ENCODE measurements at regions of chr9 and their contacts with region 1.

Region 1: DNA sequence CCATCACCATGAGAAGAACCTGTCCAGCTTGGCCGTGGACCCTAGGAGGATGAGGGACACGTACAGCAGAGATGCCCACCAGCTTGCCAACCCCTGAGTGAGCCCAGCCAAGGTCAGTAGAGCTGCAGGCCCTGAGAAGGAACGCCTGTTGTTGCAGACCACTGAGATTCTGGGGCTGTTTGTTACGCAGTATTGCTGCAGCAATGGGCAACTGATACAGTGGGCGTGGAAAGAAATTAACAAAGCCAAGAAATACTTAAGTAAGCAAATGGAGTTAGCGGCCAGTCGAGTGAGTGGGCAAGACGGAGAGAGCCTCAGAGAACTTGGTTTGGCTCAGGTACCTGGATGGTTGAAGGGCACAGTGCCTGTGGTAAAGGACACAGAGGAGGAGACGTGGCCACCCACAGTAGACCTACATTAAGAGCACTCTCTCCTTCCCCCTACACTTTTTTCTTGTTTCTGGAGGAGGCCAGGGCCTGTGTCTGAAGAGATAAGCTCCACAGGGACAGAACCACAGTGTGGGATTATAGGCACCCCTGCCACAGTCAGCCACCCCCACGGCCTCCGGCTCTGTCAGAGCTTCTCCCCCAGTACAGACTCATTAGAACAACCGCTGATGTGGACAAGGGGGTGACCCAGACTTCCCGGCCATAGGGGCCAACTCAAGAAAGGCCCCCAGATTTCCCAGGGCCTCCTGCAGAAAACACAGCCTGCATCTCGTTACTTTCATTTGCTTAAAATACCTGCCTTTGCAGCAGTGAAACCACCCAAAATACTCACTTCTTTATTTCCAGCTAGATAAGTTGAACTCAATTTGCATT is 40.1 kb upstream of the GRHPR start:
- DNase-seq: no peak
- H3K4me3 ChIP-seq: no peak overlapping the region
- H3K27ac ChIP-seq: peak overlapping the region; percentile 84
- H3K4me1 ChIP-seq: peaks cover 33% of the 10 kb centered on the region
- H3K27me3 ChIP-seq: no peaks in the 10 kb centered on the region
- CTCF ChIP-seq: no peak

Region 2: DNA sequence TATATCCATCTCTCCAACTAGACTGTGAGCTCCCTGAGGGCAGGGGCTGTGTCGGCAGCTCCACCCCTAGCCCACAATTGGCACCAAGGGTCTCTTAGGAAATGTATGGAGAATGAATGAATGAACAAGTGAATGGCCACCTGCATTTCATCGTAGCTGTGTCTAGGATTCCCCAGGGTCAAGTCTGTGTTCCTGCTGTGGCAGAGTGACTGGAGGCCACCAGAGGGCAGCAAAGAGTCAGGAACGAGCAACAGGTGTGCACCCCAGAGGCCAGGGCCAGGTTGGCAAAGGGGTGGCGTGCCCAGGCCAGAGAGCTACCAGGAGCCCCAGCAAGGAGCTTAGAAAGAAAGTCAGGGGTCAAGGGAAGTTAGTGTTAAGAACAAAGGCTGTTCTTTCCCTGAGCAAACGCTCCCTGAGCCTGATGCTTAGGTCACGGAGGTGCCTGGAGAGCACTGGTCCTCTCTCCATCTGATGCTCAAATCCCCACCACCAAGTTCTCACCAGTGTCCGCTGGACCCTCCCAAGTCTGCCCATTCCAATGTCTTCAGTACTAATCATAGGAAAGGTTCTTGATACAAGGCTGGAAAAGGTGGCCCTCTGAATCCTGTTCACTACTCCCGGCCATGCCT is 509.0 kb before region 1 on chr9:
- CTCF ChIA-PET with region 1: no interaction called
- POLR2A ChIA-PET with region 1: no interaction called
- intact Hi-C with region 1: loop called (anchors 10 kb)
- DNase-seq: peak; percentile 72
- H3K4me3 ChIP-seq: no peak overlapping the region
- H3K27ac ChIP-seq: no peak overlapping the region
- H3K4me1 ChIP-seq: no peaks in the 10 kb centered on the region
- H3K27me3 ChIP-seq: no peaks in the 10 kb centered on the region
- CTCF ChIP-seq: peak; percentile 95

Region 3: DNA sequence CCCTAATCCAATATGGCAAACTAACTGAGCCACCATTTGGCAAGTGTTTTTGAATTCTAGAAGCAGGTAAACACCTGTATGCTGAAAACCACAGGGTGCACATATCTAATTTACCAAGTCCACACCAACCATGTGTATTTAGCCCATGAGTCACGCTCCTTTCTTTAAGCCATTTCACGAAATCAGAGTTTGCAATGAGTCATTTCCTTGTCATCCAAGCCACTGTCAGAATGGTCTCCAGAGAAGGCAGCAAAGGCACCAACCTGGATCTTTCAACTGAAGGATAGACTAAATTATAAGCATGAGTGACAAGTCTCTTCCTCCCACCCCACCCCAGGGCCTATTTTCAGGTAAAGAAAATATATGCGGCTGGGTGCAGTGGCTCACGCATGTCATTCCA is 458.3 kb before region 1 on chr9:
- CTCF ChIA-PET with region 1: no interaction called
- POLR2A ChIA-PET with region 1: no interaction called
- intact Hi-C with region 1: loop called (anchors 1 kb)
- DNase-seq: peak; percentile 89
- H3K4me3 ChIP-seq: no peak overlapping the region
- H3K27ac ChIP-seq: no peak overlapping the region
- H3K4me1 ChIP-seq: peaks cover 36% of the 10 kb centered on the region
- H3K27me3 ChIP-seq: no peaks in the 10 kb centered on the region
- CTCF ChIP-seq: no peak

Region 4: DNA sequence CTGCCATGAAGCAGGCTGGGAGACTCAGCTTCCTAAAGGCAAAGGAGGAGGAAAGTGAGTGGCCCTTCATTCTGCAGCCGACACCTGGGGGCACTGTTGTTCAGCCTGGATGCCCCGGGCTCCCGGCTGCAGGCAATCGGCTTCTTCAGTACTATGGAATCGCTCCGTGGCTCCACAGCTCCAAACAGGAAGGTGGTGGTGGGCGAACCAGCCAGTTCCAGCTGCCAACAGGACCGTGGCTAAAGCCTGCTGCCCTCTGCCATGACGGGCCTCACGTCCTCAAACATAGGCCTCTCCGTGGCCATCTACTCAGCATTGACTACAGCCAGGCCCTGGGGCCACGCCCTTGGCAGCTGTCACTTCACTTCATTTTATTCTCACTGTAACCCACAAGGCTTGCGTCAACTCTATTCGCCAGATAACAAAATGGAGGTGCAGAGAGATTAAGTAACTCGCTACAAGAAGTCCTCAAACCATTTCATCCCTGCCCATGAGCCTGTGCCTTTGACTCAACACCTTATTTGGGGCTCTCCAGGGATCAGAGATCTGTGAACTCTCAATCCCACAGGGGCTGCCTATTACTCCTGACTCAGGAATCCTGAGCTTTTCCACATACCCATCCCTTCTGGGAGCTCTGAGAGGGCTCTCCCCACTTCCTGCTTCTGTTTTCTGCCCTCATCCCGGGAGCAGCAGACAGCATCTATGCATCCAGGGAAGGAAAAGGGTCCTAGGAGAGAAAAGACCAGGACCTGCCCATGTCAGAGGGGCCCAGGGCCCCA is 386.3 kb before region 1 on chr9:
- CTCF ChIA-PET with region 1: no interaction called
- POLR2A ChIA-PET with region 1: no interaction called
- intact Hi-C with region 1: loop called (anchors 10 kb)
- DNase-seq: peak; percentile 89
- H3K4me3 ChIP-seq: no peak overlapping the region
- H3K27ac ChIP-seq: no peak overlapping the region
- H3K4me1 ChIP-seq: peaks cover 19% of the 10 kb centered on the region
- H3K27me3 ChIP-seq: no peaks in the 10 kb centered on the region
- CTCF ChIP-seq: peak; percentile 89

Region 5: GRCh38 chr9:37144762-37145161 is 237.6 kb before region 1 on chr9:
- CTCF ChIA-PET with region 1: no interaction called
- POLR2A ChIA-PET with region 1: no interaction called
- intact Hi-C with region 1: loop called (anchors 5 kb)
- DNase-seq: peak; percentile 42
- H3K4me3 ChIP-seq: no peak overlapping the region
- H3K27ac ChIP-seq: peak overlapping the region; percentile 44
- H3K4me1 ChIP-seq: peaks cover 91% of the 10 kb centered on the region
- H3K27me3 ChIP-seq: no peaks in the 10 kb centered on the region
- CTCF ChIP-seq: no peak

Region 6: GRCh38 chr9:37337301-37337890 is 45.0 kb before region 1 on chr9:
- CTCF ChIA-PET with region 1: no interaction called
- POLR2A ChIA-PET with region 1: no interaction called
- intact Hi-C with region 1: loop called (anchors 2 kb)
- DNase-seq: peak; percentile 90
- H3K4me3 ChIP-seq: peak overlapping the region; percentile 11
- H3K27ac ChIP-seq: peak overlapping the region; percentile 78
- H3K4me1 ChIP-seq: peaks cover 94% of the 10 kb centered on the region
- H3K27me3 ChIP-seq: no peaks in the 10 kb centered on the region
- CTCF ChIP-seq: no peak

Region 7: DNA sequence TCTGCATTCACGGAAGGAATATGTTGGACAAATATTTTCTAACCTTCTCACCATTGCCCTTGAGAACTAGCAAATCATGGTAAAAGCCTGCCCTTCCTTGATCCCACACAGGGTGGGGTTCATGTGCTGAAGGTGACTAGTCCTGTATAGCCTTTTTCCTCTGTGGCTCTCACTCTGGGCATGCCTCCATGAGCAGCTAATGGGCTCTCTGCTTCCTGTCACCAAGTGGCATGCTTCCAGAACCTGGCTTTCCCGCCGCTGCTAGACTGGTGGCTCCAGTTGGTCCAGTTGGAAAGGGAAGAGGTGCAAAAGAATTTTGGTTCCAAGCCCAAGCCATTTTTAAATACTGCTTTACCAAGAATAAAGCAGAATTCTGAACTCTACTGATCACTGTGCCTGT is 158.3 kb after region 1 on chr9:
- CTCF ChIA-PET with region 1: no interaction called
- POLR2A ChIA-PET with region 1: no interaction called
- intact Hi-C with region 1: no loop called
- DNase-seq: no peak
- H3K4me3 ChIP-seq: no peak overlapping the region
- H3K27ac ChIP-seq: no peak overlapping the region
- H3K4me1 ChIP-seq: no peaks in the 10 kb centered on the region
- H3K27me3 ChIP-seq: no peaks in the 10 kb centered on the region
- CTCF ChIP-seq: no peak

Measured in A673 (cell line).